GM18951 (cell line): ENCODE measurements at regions of chr1 and their contacts with region 1.

Region 1: GRCh38 chr1:95035536-95035935 is 37.2 kb downstream of the ALG14 start:
- POLR2A ChIP-seq: no peak

Region 2: GRCh38 chr1:94679336-94680038 is 356.0 kb before region 1 on chr1:
- in situ Hi-C with region 1: no loop called
- POLR2A ChIP-seq: no peak

Region 3: DNA sequence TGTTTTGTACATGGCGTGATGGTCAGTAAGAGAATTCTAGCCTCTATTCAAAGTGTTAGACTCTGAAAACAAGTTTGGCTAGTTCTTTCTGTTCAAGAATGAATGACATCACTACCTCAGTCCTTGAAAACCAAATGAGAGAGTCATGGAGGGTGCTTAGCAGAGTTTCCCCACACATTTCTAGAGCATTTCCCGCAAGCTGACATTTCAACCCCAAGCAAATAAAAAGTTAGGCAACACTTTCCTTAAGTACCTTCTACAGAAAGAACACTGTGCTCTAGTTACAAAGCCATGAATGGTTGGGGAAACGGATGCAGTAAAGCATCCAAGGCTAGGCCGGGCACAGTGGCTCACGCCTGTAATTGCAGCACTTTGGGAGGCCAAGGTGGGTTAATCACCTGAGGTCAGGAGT is 263.3 kb before region 1 on chr1:
- in situ Hi-C with region 1: no loop called
- POLR2A ChIP-seq: no peak

Region 4: DNA sequence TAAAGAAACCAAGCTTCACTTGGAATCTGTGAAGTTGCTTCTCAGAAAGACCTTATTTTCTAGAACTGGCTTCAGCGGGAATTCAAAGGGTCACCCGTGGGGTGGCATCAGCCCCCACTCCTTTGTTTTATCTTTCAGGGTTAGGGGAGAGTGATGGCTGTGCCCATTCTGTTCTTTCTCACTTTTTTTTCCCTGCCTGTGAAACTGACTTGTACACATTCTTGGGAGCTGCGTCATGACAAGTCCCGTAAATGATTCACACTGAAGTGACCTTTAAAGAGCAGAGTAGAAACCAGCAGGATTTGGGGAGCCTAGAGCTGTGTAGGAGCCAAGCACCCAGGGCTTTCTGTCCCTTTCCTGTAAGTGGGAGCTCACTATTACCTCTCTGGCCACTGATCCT is 171.6 kb before region 1 on chr1:
- in situ Hi-C with region 1: loop called (anchors 5 kb)
- POLR2A ChIP-seq: no peak